Colonic mucosa (tissue), 4 donors: ENCODE measurements at regions of chr2 and their contacts with region 1.

Region 1: GRCh38 chr2:152036611-152037469 is 62.0 kb downstream of the CACNB4 start:
- DNase-seq: peak; percentile 73
- H3K4me3 ChIP-seq: no peak overlapping the region
- H3K27ac ChIP-seq: no peak overlapping the region
- H3K4me1 ChIP-seq: no peaks in the 10 kb centered on the region
- H3K27me3 ChIP-seq: no peaks in the 10 kb centered on the region
- CTCF ChIP-seq: peak; percentile 68

Region 2: GRCh38 chr2:152635635-152636298 is 598.9 kb after region 1 on chr2:
- intact Hi-C with region 1: loop called (anchors 5 kb)
- DNase-seq: peak; percentile 73
- H3K4me3 ChIP-seq: no peak overlapping the region
- H3K27ac ChIP-seq: no peak overlapping the region
- H3K4me1 ChIP-seq: no peaks in the 10 kb centered on the region
- H3K27me3 ChIP-seq: no peaks in the 10 kb centered on the region
- CTCF ChIP-seq: peak; percentile 80